ENCODE measurements at regions of chr14 and their contacts with region 1.

Region 1: DNA sequence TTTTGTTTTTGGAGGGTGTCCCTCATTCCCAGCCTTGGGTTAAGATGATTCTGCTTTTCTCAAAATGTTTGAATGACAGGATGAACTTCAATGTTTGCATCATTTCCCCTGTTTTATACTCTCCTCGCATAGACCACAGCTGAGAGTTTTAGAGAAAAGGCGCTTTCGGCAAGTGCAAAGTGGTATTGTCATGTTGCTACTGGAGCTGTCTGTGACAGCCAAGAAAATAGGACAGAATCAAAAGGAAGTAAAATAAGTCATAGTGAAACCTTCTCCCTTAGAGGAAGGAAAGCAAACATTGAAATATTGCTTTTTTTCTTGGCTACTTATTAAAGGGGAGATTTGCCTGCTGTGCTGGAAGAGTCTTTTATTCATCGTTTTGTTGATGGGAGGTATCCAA is 33.5 kb upstream of the ARHGAP5 start:
- H3K4me3 Mint-ChIP-seq: no peak overlapping the region
- H3K27ac Mint-ChIP-seq: no peak overlapping the region
- H3K4me1 Mint-ChIP-seq: peaks cover 7% of the 10 kb centered on the region
- H3K27me3 Mint-ChIP-seq: peaks cover 22% of the 10 kb centered on the region

Region 2: DNA sequence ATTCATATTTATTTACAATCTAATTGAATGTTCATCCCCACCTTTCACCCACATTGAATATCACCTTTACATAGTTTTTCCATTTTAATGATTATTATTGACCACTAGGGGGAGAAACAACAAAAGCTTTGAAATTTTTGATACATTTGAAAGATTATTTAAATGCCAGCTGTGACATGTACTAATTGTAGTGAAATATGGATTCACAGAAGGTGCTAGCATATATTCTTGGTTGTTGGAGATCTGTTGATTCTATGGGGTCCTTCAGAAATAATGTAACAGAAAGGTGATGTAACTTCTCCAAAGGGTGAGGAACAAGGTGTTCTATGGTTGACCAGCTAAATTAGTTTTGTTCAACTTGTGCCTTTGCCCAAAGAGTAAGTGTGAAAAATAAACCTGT is 533.4 kb before region 1 on chr14:
- intact Hi-C with region 1: loop called (anchors 10 kb)
- H3K4me3 Mint-ChIP-seq: no peak overlapping the region
- H3K27ac Mint-ChIP-seq: no peak overlapping the region
- H3K4me1 Mint-ChIP-seq: no peaks in the 10 kb centered on the region
- H3K27me3 Mint-ChIP-seq: peaks cover 12% of the 10 kb centered on the region

Region 3: DNA sequence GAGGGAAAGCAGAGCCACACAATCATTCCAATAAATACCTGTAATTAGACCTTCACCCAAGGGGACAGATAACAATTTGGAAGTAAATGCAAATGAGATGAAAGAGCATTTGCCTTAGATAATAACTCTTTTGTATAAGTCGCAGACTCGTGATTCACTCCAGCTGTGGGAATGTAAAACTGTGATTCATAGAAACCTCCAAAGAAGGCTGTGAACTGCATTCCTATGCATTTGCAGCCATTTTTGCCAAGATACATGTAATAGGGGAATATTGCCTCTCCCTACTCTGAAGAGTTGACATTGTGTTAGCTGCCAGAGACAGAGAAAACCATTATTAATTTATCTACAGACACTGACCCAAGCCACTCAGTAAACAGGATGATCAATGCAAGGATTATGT is 148.4 kb before region 1 on chr14:
- intact Hi-C with region 1: loop called (anchors 10 kb)
- H3K4me3 Mint-ChIP-seq: no peak overlapping the region
- H3K27ac Mint-ChIP-seq: no peak overlapping the region
- H3K4me1 Mint-ChIP-seq: peaks cover 25% of the 10 kb centered on the region
- H3K27me3 Mint-ChIP-seq: peaks cover 7% of the 10 kb centered on the region

Region 4: DNA sequence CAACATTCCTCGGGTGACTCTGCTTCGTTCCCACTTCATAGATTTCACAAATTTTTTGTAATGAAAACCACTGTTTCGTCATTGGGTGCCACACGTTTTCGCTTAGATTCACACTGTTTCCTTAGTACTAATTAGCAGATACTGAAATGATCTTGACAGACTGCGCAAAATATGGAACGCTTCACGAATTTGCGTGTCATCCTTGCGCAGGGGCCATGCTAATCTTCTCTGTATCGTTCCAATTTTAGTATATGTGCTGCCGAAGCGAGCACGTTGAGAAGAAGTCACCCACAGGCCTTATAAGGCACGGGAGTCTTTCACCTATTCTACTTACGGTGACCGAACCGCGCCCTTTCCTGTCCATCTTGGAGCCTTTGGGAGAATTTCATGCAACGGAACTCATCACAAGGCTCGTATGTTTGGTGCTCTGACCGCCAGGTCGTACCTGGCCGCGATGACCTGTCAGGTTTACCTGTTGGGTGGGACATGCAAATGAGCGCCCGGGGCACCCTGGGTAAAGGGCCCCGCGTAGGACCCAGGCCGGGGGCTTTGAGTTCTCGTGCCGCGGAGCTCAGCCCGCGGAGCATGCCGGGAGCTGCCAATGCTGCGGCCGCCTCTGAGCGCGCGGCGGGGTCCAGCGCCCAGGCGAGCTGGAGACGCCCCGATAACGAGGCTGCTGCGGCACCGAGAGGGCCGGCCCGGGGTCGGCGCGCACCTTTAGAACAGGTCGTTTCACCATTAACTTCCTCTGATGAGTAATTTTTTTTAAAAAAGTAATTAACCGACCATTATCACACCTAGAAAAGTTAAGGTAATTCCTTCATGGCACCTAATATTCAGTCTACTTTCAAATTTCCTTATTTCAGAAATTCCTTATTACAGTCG is 159.6 kb after region 1 on chr14 and contains the start of gene RNU6-8:
- intact Hi-C with region 1: loop called (anchors 10 kb)
- H3K4me3 Mint-ChIP-seq: peak within 1 kb of the TSS; percentile 51
- H3K27ac Mint-ChIP-seq: no peak within 1 kb of the TSS
- H3K4me1 Mint-ChIP-seq: peaks cover 44% of the 10 kb centered on the region
- H3K27me3 Mint-ChIP-seq: peaks cover 60% of the 10 kb centered on the region

Measured in dendritic cell treated with granulocyte-macrophage colony-stimulating factor and Interleukin-4, amounts not matched to agents 40 ng/mL and 50 ng/mL, for 4 days (primary cell).